A549 (cell line): ENCODE measurements at regions of chr15 and their contacts with region 1.

Region 1: DNA sequence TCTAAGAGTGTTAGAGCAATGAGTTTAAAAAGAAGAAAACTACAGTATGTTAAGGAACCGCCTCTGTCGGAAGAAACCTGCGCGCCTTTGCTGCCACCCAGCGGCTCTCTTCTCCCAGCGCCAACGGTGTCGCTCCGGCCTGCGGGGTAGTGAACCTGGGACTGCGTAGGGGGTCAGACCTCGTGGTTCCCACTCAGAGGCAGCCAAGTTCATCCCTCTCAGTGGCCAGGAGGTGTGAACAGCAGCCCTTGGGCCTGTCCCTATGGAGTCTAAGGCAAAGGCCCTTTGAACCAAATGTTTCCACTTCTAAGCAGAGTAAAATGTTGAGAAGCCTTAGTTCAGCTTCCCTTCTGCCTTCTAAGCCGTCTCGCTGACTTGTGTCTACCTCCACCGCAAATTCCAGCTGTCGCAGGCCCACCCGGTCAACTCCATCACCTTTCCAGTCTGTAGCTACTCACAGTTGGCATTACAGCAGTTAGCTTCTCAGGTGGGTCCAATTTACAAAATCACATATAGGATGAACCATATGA is 980 bp upstream of the RAB27A start:
- DNase-seq: peak; percentile 81 to 86
- ATAC-seq: peak; percentile 87 to 94
- H3K4me3 ChIP-seq: peak overlapping the region; percentile 83
- H3K27ac ChIP-seq: peak overlapping the region; percentile 83 to 88
- H3K4me1 ChIP-seq: peaks cover 4% of the 10 kb centered on the region; the same call in 1 of the 3 replicates
- CTCF ChIP-seq: peak; percentile 98
- EP300 ChIP-seq: no peak
- POLR2A ChIP-seq: no peak
- RAD21 ChIP-seq: peak; percentile 92 to 99

Region 2: GRCh38 chr15:55279746-55280351 is 10.7 kb before region 1 on chr15:
- CTCF ChIA-PET with region 1: interaction called, 16 read pairs
- POLR2A ChIA-PET with region 1: no interaction called
- DNase-seq: peak; percentile 23 to 66
- ATAC-seq: peak; percentile 73 to 78
- H3K4me3 ChIP-seq: no peak overlapping the region
- H3K27ac ChIP-seq: peak overlapping the region; percentile 26 to 29; a peak in 4 of 6 replicates
- H3K4me1 ChIP-seq: peaks cover 13% of the 10 kb centered on the region
- CTCF ChIP-seq: no peak
- EP300 ChIP-seq: no peak
- POLR2A ChIP-seq: no peak
- RAD21 ChIP-seq: no peak

Region 3: GRCh38 chr15:55334997-55335396 is 44.4 kb after region 1 on chr15:
- CTCF ChIA-PET with region 1: no interaction called
- POLR2A ChIA-PET with region 1: no interaction called
- DNase-seq: peak in 1 of 2 experiments; percentile 37
- ATAC-seq: peak in 1 of 2 experiments; percentile 59; a peak in 2 of 6 replicates
- H3K4me3 ChIP-seq: no peak overlapping the region
- H3K27ac ChIP-seq: no peak overlapping the region
- H3K4me1 ChIP-seq: peaks cover 2% of the 10 kb centered on the region; the same call in 1 of the 3 replicates
- CTCF ChIP-seq: no peak
- EP300 ChIP-seq: no peak
- POLR2A ChIP-seq: no peak
- RAD21 ChIP-seq: no peak

Region 4: DNA sequence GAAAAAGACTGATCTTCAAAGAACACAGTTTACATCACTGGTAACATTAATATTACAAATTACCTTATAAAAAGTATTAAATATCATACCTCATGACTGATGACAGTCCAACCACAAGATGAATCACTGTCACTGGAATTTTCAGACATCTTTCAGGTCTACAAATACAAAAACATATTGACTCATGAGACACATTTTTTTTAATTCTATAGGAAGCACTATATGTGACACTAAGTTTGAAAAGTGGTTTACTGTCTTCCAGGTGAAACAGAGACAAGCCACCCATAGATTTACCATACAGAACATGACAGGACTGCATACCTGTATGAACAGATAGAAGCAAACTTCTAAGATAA is 98.7 kb after region 1 on chr15:
- CTCF ChIA-PET with region 1: no interaction called
- POLR2A ChIA-PET with region 1: no interaction called
- DNase-seq: peak; percentile 31 to 33
- ATAC-seq: peak; percentile 51 to 74; a peak in 5 of 6 replicates
- H3K4me3 ChIP-seq: no peak overlapping the region
- H3K27ac ChIP-seq: peak overlapping the region; percentile 19 to 25; a peak in 2 of 6 replicates
- H3K4me1 ChIP-seq: peaks cover 15% of the 10 kb centered on the region
- CTCF ChIP-seq: no peak
- EP300 ChIP-seq: no peak
- POLR2A ChIP-seq: no peak
- RAD21 ChIP-seq: no peak